ENCODE measurements at regions of chr12 and their contacts with region 1.

Region 1: DNA sequence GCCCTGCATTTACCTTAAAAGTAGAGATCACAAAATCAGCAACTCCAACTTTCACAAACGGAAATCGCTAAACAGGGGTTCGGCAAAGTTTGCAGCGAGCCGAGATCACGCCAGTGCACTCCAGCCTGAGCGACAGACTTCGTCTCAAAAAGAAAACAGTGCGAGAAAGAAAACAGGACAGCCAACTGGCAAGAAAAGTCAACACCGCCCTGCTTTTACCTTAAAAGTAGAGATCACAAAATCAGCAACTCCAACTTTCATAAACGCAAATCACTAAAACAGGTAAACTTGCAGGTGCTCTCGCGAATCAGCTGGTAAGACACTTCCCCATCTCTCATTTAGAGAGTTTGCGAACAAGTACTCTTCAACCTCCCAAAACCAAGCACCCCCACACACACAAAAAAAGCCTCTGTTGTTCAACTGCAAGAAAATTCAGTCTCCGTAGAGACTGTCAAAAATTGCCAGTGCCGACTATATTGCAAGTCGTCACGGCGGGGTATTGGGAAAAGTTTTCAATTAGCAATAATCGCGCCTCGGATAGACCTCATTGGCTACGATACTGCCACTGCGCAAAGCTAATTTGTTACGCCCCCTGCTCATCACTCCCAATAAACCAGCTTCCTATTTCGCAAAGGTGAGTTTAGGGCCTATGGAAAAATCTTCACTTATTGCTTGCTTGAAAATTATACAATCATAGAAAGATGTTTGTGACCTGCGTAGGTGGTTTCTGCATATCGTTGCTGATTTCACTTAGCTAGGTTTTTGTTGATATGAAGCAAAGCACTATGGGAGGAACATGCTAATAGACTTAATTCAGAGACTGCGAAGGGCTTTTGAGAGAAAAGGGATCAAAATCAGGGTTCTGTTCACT is at the start of gene RNU4-1:
- DNase-seq: peak; percentile 54 to 94 (median 61)
- ATAC-seq: peak; percentile 76
- H3K4me3 ChIP-seq: peak within 1 kb of the TSS; percentile 44
- H3K27ac ChIP-seq: peak within 1 kb of the TSS; percentile 100
- H3K4me1 ChIP-seq: peaks cover 8 to 18% of the 10 kb centered on the region in 2 experiments; a peak in 4 of 5 replicates
- H3K27me3 ChIP-seq: no peaks in the 10 kb centered on the region
- CTCF ChIP-seq: no peak
- EP300 ChIP-seq: peak; percentile 62
- POLR2A ChIP-seq: peak; percentile 100
- RAD21 ChIP-seq: no peak
- polyA plus RNA-seq, gene RNU4-1: not detected

Region 2: GRCh38 chr12:120200364-120200800 is 92.5 kb before region 1 on chr12:
- CTCF ChIA-PET with region 1: no interaction called
- POLR2A ChIA-PET with region 1: interaction called, 217 read pairs
- in situ Hi-C with region 1: no loop called
- intact Hi-C with region 1: no loop called
- DNase-seq: no peak
- ATAC-seq: no peak
- H3K4me3 ChIP-seq: peak overlapping the region; percentile 84
- H3K27ac ChIP-seq: peak overlapping the region; percentile 92
- H3K4me1 ChIP-seq: peaks cover 6 to 29% of the 10 kb centered on the region in 2 experiments; a peak in 4 of 5 replicates
- H3K27me3 ChIP-seq: no peaks in the 10 kb centered on the region
- CTCF ChIP-seq: no peak
- EP300 ChIP-seq: no peak
- POLR2A ChIP-seq: no peak
- RAD21 ChIP-seq: no peak

Region 3: GRCh38 chr12:120249875-120250795 is 42.8 kb before region 1 on chr12:
- CTCF ChIA-PET with region 1: no interaction called
- POLR2A ChIA-PET with region 1: interaction called, 53 read pairs
- in situ Hi-C with region 1: no loop called
- intact Hi-C with region 1: no loop called
- DNase-seq: no peak
- ATAC-seq: peak; percentile 16; the same call in 2 of the 3 replicates
- H3K4me3 ChIP-seq: no peak overlapping the region
- H3K27ac ChIP-seq: no peak overlapping the region
- H3K4me1 ChIP-seq: peaks cover 30 to 38% of the 10 kb centered on the region in 2 experiments
- H3K27me3 ChIP-seq: no peaks in the 10 kb centered on the region
- CTCF ChIP-seq: no peak
- EP300 ChIP-seq: no peak
- POLR2A ChIP-seq: no peak
- RAD21 ChIP-seq: no peak

Region 4: DNA sequence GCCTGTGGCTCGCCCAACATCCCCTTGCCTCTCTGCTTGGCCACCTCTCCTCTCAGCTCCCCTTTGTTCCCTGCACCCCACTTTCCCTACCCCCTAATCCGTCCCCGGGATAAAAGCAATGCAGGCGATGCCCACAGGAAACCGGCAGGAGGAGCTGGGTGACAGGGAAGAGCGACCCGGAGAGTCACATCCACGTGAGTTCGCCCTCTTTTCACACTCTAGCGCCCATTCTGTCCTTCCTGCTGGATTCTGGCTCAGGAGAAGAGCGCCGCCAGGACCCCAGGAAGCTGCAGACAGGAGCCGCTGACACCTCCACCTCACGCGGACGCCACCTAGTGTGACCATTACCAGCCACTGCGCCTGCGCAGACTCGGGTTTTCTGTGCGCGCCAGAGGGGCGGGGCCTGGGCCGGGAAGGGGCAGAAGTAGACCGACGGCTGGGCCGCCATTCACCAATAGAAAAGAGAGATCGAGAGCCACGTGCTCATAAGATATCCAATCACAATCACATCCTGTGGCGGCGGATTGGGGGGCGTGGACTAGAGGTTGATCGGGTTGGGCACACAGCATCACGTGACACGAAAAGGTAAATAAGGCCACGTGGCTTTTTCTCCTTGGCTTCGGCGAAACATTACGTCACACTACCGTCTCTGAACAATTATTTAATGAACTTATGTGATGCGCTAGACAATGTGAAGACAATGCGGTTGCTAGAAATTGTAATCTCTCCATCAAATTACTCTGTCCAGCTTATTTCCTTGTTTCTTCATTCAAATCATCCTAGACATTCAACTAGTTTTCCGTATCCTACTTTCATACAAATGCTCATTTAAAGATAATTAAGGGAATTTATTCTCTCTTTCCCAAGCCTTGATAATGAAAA is 24.6 kb after region 1 on chr12:
- CTCF ChIA-PET with region 1: no interaction called
- POLR2A ChIA-PET with region 1: interaction called, 183 read pairs
- in situ Hi-C with region 1: no loop called
- intact Hi-C with region 1: loop called (anchors 1 kb)
- DNase-seq: peak; percentile 99 to 100 (median 99)
- ATAC-seq: peak; percentile 99
- H3K4me3 ChIP-seq: peak overlapping the region; percentile 48
- H3K27ac ChIP-seq: peak overlapping the region; percentile 85
- H3K4me1 ChIP-seq: peaks cover 3 to 10% of the 10 kb centered on the region in 2 experiments; a peak in 4 of 5 replicates
- H3K27me3 ChIP-seq: no peaks in the 10 kb centered on the region
- CTCF ChIP-seq: peak; percentile 74 to 94 (median 85)
- EP300 ChIP-seq: no peak
- POLR2A ChIP-seq: peak; percentile 93
- RAD21 ChIP-seq: peak in 1 of 2 experiments; percentile 49; a peak in 2 of 4 replicates

Region 5: GRCh38 chr12:120437754-120438494 is 145.0 kb after region 1 on chr12 and contains the start of gene COX6A1:
- CTCF ChIA-PET with region 1: no interaction called
- POLR2A ChIA-PET with region 1: interaction called, 18 read pairs
- in situ Hi-C with region 1: no loop called
- intact Hi-C with region 1: no loop called
- DNase-seq: peak; percentile 97 to 99 (median 98)
- ATAC-seq: peak; percentile 98
- H3K4me3 ChIP-seq: peak within 1 kb of the TSS; percentile 91
- H3K27ac ChIP-seq: peak within 1 kb of the TSS; percentile 86
- H3K4me1 ChIP-seq: peaks cover 3 to 8% of the 10 kb centered on the region in 2 experiments; a peak in 4 of 5 replicates
- H3K27me3 ChIP-seq: no peaks in the 10 kb centered on the region
- CTCF ChIP-seq: peak in 2 of 3 experiments; percentile 21 to 25; a peak in 3 of 6 replicates
- EP300 ChIP-seq: peak; percentile 32; the same call in 1 of the 2 replicates
- POLR2A ChIP-seq: peak; percentile 94
- RAD21 ChIP-seq: no peak
- polyA plus RNA-seq, gene COX6A1: 3,092 to 4,142 TPM